IMR-90 (cell line): ENCODE measurements at regions of chr6 and their contacts with region 1.

Region 1: GRCh38 chr6:164396071-164397047 is 913.0 kb downstream of the C6orf118 start:
- DNase-seq: no peak
- ATAC-seq: no peak
- H3K4me3 ChIP-seq: no peak overlapping the region
- H3K27ac ChIP-seq: no peak overlapping the region
- H3K4me1 ChIP-seq: no peaks in the 10 kb centered on the region
- H3K27me3 ChIP-seq: no peaks in the 10 kb centered on the region
- CTCF ChIP-seq: no peak
- POLR2A ChIP-seq: no peak
- RAD21 ChIP-seq: no peak

Region 2: DNA sequence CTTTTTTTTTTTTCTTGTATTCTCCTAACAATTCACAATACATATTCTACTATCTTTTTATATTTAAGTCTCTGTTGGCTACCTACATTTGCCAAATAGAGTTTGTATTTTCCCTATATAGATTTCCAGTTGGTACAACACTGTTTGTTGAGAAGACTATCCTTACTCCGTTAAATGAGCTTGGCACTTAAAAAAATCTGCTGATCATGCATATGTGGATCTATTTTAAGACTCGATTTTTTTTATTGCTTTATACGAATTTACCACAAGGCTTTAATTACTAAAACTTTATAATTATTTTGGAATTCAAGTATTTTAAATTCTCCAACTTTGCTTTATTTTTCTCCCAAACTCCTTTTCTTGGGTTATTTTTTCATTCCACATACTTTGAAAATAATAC is 57.5 kb after region 1 on chr6:
- CTCF ChIA-PET with region 1: no interaction called
- POLR2A ChIA-PET with region 1: interaction called, 11 read pairs
- dilution Hi-C with region 1: no loop called
- in situ Hi-C with region 1: no loop called
- intact Hi-C with region 1: no loop called
- DNase-seq: no peak
- ATAC-seq: no peak
- H3K4me3 ChIP-seq: no peak overlapping the region
- H3K27ac ChIP-seq: no peak overlapping the region
- H3K4me1 ChIP-seq: no peaks in the 10 kb centered on the region
- H3K27me3 ChIP-seq: no peaks in the 10 kb centered on the region
- CTCF ChIP-seq: no peak
- POLR2A ChIP-seq: no peak
- RAD21 ChIP-seq: no peak